Activated CD4-positive, alpha-beta memory T cell treated with anti-CD3 and anti-CD28 coated beads for 36 hours (primary cell): ENCODE measurements at regions of chr4 and their contacts with region 1.

Region 1: GRCh38 chr4:158253350-158253980 is 43.2 kb downstream of the TMEM144 start:
- DNase-seq: peak; percentile 49
- H3K4me3 Mint-ChIP-seq: no peak overlapping the region
- H3K27ac Mint-ChIP-seq: no peak overlapping the region
- H3K4me1 Mint-ChIP-seq: peaks cover 6% of the 10 kb centered on the region
- H3K27me3 Mint-ChIP-seq: peaks cover 9% of the 10 kb centered on the region

Region 2: GRCh38 chr4:158193171-158193749 is 60.2 kb before region 1 on chr4:
- CTCF ChIA-PET with region 1: interaction called, 10 read pairs
- POLR2A ChIA-PET with region 1: no interaction called
- intact Hi-C with region 1: loop called (anchors 1 kb)
- DNase-seq: no peak
- H3K4me3 Mint-ChIP-seq: no peak overlapping the region
- H3K27ac Mint-ChIP-seq: no peak overlapping the region
- H3K4me1 Mint-ChIP-seq: no peaks in the 10 kb centered on the region
- H3K27me3 Mint-ChIP-seq: no peaks in the 10 kb centered on the region

Region 3: GRCh38 chr4:158496030-158496741 is 242.7 kb after region 1 on chr4:
- CTCF ChIA-PET with region 1: no interaction called
- POLR2A ChIA-PET with region 1: no interaction called
- intact Hi-C with region 1: loop called (anchors 10 kb)
- DNase-seq: peak; percentile 51
- H3K4me3 Mint-ChIP-seq: no peak overlapping the region
- H3K27ac Mint-ChIP-seq: no peak overlapping the region
- H3K4me1 Mint-ChIP-seq: no peaks in the 10 kb centered on the region
- H3K27me3 Mint-ChIP-seq: peaks cover 2% of the 10 kb centered on the region

Region 4: DNA sequence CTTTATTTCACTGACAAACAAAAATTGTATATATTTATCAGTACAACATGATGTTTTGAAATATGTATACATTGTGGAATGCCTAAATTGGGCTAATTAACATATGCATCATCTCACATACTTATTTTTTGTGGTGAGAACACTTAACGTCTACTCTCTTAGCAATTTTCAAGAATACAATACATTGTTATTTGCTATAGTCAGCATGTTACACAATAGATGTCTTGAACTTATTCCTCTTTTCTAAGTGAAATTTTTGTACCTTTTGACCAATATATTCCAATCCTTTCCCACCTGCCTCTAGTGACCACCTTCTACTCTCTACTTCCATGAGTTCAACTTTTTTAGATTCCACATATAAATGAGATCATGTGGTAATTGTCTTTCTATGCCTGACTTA is 383.2 kb after region 1 on chr4:
- CTCF ChIA-PET with region 1: no interaction called
- POLR2A ChIA-PET with region 1: no interaction called
- intact Hi-C with region 1: no loop called
- DNase-seq: no peak
- H3K4me3 Mint-ChIP-seq: no peak overlapping the region
- H3K27ac Mint-ChIP-seq: no peak overlapping the region
- H3K4me1 Mint-ChIP-seq: no peaks in the 10 kb centered on the region
- H3K27me3 Mint-ChIP-seq: peaks cover 3% of the 10 kb centered on the region

Region 5: DNA sequence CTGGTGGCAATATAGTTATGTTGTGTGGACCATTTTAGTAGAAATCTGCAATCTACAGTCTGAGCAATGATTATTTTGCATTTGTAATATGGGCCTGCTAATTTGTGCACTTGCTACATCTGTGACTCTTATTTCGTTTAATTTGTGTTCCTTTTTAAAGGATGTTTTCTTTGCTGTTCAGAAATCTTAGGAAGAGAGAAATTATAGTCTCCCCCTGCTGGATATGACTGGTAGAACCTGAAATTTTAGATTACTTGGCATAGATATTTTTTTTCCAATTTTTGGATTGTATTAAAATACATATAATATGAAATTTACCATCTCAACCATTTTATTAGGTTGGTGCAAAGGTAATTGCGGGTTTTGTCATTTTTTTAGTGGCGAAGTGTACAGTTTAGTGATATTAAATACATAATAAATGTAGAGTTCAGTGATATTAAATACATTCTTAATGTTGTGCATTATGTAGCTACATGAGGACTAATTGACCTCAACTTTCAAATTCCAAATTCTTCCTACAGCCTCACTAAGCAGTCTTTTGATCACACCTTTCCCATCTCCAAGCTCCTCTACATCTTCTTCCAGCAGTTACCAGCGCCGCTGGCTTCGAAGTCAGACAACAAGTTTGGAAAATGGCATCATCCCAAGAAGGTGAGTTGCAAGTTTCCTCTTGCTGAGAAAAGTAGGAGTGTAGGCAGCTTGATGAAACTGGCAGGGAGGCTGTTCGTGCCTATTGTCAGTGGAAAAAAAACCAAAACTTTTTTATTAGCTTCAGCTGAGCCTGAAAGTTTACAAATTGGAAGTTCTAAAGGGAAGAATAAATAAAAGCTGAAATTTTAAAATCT is 597.6 kb after region 1 on chr4:
- CTCF ChIA-PET with region 1: interaction called, 3 read pairs
- POLR2A ChIA-PET with region 1: no interaction called
- intact Hi-C with region 1: loop called (anchors 5 kb)
- DNase-seq: no peak
- H3K4me3 Mint-ChIP-seq: no peak overlapping the region
- H3K27ac Mint-ChIP-seq: no peak overlapping the region
- H3K4me1 Mint-ChIP-seq: peaks cover 18% of the 10 kb centered on the region
- H3K27me3 Mint-ChIP-seq: no peaks in the 10 kb centered on the region